ENCODE measurements at regions of chr20 and their contacts with region 1.

Region 1: DNA sequence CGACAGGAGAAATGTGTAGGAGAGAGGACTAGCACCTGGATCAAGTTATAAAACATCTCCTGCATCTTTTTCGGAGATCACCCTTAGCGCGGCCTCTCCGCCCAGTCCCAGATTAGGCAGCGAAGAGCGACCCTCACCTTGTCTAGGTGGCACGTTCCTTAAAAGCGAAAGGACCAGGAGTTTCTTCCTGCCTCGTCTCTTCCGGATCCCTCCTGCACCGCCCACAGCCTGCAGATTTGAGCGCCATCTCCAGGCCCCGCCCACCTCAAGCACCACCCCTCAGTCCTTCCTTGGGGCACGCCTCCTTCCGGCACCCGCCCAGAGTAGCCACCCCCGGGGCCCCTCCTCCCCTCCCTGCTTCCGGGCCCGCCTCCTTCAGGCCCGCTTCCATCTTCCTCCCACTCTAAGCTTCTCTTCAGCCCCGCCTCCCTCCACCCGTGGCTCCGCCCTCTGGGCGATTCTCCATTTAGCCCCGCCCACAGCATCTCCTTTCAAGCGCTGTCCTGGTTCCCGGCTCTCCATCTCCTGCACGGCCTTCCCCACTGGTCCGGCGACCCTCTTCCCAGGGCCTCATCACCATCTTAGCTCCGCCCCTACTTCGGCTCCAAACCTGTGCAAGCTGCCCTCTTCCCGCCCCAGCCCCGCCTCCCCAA is 662 bp upstream of the RALY start:
- DNase-seq: peak; percentile 97 to 100 (median 100)
- ATAC-seq: peak; percentile 91
- H3K4me3 ChIP-seq: peak overlapping the region; percentile 96
- H3K4me3 Mint-ChIP-seq: peak overlapping the region; percentile 87 to 99 (median 96)
- H3K27ac ChIP-seq: peak overlapping the region; percentile 97
- H3K27ac Mint-ChIP-seq: peak overlapping the region; percentile 91 to 99 (median 96)
- H3K4me1 ChIP-seq: peaks cover 32 to 43% of the 10 kb centered on the region in 2 donors
- H3K4me1 Mint-ChIP-seq: peaks cover 44 to 69% (median 60%) of the 10 kb centered on the region in 7 donors
- H3K27me3 ChIP-seq: no peaks in the 10 kb centered on the region
- H3K27me3 Mint-ChIP-seq: no peaks in the 10 kb centered on the region

Region 2: GRCh38 chr20:32972181-32973076 is 1020.6 kb before region 1 on chr20:
- CTCF ChIA-PET with region 1: no interaction called
- POLR2A ChIA-PET with region 1: no interaction called
- intact Hi-C with region 1: loop called in 1 of 2 experiments (anchors 5 kb)
- DNase-seq: peak; percentile 31 to 96 (median 94)
- ATAC-seq: peak; percentile 90
- H3K4me3 ChIP-seq: peak overlapping the region; percentile 53
- H3K4me3 Mint-ChIP-seq: peak overlapping the region in 1 of 10 donors; percentile 54
- H3K27ac ChIP-seq: peak overlapping the region; percentile 85
- H3K27ac Mint-ChIP-seq: no peak overlapping the region
- H3K4me1 ChIP-seq: peaks cover 73 to 92% of the 10 kb centered on the region in 2 donors
- H3K4me1 Mint-ChIP-seq: peaks cover 13 to 56% (median 46%) of the 10 kb centered on the region in 7 donors
- H3K27me3 ChIP-seq: no peaks in the 10 kb centered on the region
- H3K27me3 Mint-ChIP-seq: no peaks in the 10 kb centered on the region

Region 3: DNA sequence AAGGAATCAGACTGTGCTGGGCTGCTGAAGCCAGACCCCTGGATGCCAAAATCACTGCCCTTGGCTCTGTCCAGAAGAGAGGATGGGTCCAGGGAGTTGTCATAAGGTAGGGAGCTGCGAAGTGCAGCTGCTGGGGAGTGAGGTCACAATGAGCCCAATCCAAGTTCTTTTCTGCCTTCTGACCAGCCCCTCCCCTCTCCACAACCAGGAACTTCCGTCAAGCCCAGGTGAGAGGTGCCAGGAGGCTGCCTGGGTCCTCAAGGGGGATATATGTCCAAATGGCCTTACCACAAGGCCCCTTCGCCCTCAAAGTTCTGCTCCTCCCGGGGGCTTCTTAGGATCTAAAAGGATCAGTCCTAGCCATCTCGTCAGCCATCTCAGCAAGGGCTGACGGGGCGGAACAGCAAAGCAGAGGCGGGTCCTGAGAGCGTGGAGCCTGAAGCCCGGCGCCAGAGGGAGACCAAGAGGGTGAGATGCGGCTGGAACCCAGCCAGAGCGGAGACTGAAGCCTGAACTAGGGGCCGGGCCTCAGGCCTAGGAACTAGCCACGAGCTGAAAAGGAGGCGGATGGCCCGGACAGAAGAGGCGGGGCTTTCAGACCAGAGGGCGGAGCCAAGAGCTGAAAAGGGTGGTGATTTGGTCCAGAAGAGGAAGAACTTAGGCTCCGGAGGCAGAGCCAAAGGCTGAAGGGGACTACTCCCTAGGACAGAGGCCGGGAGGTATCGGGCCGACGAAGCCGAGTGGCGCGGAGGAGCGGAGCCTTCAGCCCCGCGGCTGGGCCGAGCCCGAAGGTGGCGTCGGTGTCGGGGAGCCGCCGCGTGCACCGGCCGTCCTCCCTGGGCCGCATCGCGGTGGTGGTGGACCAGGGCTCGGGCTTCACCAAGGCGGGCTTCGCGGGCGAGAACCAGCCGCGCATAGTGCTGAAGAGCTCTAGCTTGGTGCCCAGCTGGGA is 326.5 kb before region 1 on chr20 and contains the start of gene ACTL10:
- CTCF ChIA-PET with region 1: no interaction called
- POLR2A ChIA-PET with region 1: interaction called, 4 read pairs
- intact Hi-C with region 1: loop called (anchors 1 to 5 kb)
- DNase-seq: peak; percentile 45 to 86 (median 60)
- ATAC-seq: peak; percentile 79
- H3K4me3 ChIP-seq: peak within 1 kb of the TSS; percentile 79
- H3K4me3 Mint-ChIP-seq: peak within 1 kb of the TSS; percentile 95 to 100 (median 98)
- H3K27ac ChIP-seq: peak within 1 kb of the TSS; percentile 60
- H3K27ac Mint-ChIP-seq: peak within 1 kb of the TSS; percentile 90 to 98 (median 95)
- H3K4me1 ChIP-seq: peaks cover 19 to 21% of the 10 kb centered on the region in 2 donors
- H3K4me1 Mint-ChIP-seq: peaks cover 21 to 54% (median 35%) of the 10 kb centered on the region in 7 donors
- H3K27me3 ChIP-seq: no peaks in the 10 kb centered on the region
- H3K27me3 Mint-ChIP-seq: no peaks in the 10 kb centered on the region
- total RNA-seq, gene ACTL10: 0.66 to 4.9 (median 3.2) TPM

Region 4: DNA sequence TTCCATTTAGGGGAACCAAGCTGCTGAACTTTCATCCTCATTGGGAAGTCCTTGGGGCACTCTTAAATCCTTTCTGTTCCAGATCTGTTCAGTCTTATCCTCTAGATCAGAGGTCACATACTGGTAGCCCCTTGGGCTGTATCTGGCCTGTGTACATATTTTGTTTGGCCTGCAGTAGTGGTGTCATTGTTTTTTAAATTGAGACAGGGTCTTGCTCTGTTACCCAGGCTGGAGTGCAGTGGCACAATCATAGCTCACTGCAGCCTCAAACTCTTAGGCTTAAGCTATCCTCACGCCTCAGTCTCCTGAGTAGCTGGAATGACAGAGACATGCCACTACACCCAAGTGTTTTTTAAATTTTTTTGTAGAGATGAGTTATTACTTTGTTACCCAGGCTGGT is 15.4 kb after region 1 on chr20:
- CTCF ChIA-PET with region 1: no interaction called
- POLR2A ChIA-PET with region 1: interaction called, 8 read pairs
- intact Hi-C with region 1: loop called (anchors 2 kb)
- DNase-seq: no peak
- ATAC-seq: no peak
- H3K4me3 ChIP-seq: no peak overlapping the region
- H3K4me3 Mint-ChIP-seq: peak overlapping the region; percentile 30 to 76 (median 67)
- H3K27ac ChIP-seq: no peak overlapping the region
- H3K27ac Mint-ChIP-seq: peak overlapping the region in 8 of 9 donors; percentile 38 to 88 (median 68)
- H3K4me1 ChIP-seq: peaks cover 31 to 65% of the 10 kb centered on the region in 2 donors
- H3K4me1 Mint-ChIP-seq: peaks cover 72 to 96% (median 90%) of the 10 kb centered on the region in 7 donors
- H3K27me3 ChIP-seq: no peaks in the 10 kb centered on the region
- H3K27me3 Mint-ChIP-seq: no peaks in the 10 kb centered on the region

Region 5: DNA sequence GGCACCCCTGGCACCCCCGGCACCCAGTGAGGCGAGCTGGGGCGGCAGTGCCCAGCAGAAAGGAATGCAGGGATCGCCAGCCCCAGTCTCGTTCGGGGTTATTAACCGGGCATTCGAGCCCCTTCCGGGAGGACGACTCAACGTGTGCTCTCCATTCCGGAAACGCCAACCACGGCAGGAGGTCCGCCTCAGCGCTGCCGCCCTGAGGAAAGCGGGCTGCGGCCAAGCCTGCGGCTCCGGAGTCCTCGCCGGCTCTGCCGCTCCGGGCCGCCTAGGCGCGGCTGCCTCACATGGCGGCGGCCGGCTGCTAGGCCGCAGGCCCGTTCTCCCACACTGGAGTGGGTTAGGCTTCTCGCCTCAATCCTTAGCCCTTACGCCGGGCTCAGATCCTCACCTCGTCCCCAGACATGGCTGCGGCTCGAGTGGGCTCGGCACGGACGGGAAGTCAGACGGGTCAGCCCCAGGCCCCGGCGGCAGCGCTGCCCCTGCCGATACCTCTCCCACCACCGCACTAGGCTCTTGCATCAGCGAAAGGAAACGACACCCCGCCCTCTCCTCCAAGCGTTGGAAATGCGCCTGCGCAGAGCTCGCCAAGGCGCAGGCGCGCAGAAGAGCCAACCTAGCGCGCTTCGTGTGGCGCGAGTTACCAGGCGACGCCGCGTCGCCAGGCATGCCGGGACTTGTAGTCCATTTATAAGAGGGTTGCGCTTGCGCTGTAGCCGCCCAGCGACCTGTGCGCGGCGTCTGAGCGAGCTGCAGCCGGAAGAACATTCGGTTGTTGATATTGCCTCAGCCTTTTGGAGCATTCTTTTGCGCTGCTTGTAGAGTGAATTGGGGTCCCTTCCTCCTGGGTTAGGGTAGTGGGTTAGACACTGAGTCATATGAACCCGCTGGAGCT is 118.9 kb after region 1 on chr20 and contains the start of gene EIF2S2:
- CTCF ChIA-PET with region 1: no interaction called
- POLR2A ChIA-PET with region 1: interaction called, 26 read pairs
- intact Hi-C with region 1: loop called (anchors 1 kb)
- DNase-seq: peak; percentile 88 to 97 (median 95)
- ATAC-seq: peak; percentile 95
- H3K4me3 ChIP-seq: peak within 1 kb of the TSS; percentile 92
- H3K4me3 Mint-ChIP-seq: peak within 1 kb of the TSS; percentile 87 to 98 (median 96)
- H3K27ac ChIP-seq: peak within 1 kb of the TSS; percentile 89
- H3K27ac Mint-ChIP-seq: peak within 1 kb of the TSS; percentile 96 to 99 (median 98)
- H3K4me1 ChIP-seq: peaks cover 24 to 34% of the 10 kb centered on the region in 2 donors
- H3K4me1 Mint-ChIP-seq: peaks cover 34 to 53% (median 47%) of the 10 kb centered on the region in 7 donors
- H3K27me3 ChIP-seq: no peaks in the 10 kb centered on the region
- H3K27me3 Mint-ChIP-seq: peaks cover 0 to 15% (median 0%) of the 10 kb centered on the region in 5 donors
- total RNA-seq, gene EIF2S2: 16.8 to 68.4 (median 48.6) TPM

Region 6: DNA sequence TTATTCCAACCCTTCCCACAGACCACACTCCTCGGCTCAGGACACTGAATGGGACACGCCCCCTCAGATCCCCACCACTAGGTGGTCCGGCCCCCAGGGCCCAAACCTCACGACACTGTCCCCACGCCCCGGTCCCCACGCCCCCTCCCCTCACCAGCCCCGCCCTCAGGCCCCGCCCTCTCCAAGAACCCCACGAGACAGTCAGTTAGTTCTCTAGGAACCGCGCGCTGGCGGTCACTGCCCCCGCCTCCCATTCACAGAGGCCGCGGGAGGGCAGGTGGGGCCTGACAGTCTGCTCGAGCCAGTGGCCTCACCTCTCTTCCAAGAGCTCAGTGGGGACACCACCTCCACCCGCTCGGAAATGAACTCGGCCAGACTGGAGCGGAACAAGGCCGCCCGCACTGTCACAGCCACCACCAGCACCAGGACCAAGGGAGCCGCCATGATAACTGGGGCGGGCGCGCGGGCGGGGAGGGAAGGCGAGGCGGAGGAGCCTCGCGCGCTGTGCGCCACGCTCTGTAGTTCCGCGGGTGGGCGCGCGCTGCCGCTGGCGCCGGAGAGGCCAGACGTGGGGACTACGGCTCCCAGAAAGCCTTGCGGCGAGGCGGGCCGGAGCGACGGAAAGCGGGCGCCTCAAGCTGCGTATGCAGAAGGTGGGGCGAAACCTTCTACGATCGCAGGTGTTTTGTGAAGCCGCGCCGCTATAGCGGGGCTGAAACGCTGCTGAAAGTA is 683.8 kb after region 1 on chr20 and contains the start of gene PIGU:
- CTCF ChIA-PET with region 1: no interaction called
- POLR2A ChIA-PET with region 1: no interaction called
- intact Hi-C with region 1: loop called (anchors 1 kb)
- DNase-seq: peak; percentile 88 to 97 (median 96)
- ATAC-seq: peak; percentile 99
- H3K4me3 ChIP-seq: peak within 1 kb of the TSS; percentile 63
- H3K4me3 Mint-ChIP-seq: peak within 1 kb of the TSS; percentile 95 to 99 (median 96)
- H3K27ac ChIP-seq: peak within 1 kb of the TSS; percentile 95
- H3K27ac Mint-ChIP-seq: peak within 1 kb of the TSS; percentile 85 to 98 (median 97)
- H3K4me1 ChIP-seq: peaks cover 4 to 5% of the 10 kb centered on the region in 2 donors
- H3K4me1 Mint-ChIP-seq: peaks cover 14 to 37% (median 24%) of the 10 kb centered on the region in 7 donors
- H3K27me3 ChIP-seq: no peaks in the 10 kb centered on the region
- H3K27me3 Mint-ChIP-seq: no peaks in the 10 kb centered on the region
- total RNA-seq, gene PIGU: 8.6 to 21.3 (median 16.1) TPM

Region 7: DNA sequence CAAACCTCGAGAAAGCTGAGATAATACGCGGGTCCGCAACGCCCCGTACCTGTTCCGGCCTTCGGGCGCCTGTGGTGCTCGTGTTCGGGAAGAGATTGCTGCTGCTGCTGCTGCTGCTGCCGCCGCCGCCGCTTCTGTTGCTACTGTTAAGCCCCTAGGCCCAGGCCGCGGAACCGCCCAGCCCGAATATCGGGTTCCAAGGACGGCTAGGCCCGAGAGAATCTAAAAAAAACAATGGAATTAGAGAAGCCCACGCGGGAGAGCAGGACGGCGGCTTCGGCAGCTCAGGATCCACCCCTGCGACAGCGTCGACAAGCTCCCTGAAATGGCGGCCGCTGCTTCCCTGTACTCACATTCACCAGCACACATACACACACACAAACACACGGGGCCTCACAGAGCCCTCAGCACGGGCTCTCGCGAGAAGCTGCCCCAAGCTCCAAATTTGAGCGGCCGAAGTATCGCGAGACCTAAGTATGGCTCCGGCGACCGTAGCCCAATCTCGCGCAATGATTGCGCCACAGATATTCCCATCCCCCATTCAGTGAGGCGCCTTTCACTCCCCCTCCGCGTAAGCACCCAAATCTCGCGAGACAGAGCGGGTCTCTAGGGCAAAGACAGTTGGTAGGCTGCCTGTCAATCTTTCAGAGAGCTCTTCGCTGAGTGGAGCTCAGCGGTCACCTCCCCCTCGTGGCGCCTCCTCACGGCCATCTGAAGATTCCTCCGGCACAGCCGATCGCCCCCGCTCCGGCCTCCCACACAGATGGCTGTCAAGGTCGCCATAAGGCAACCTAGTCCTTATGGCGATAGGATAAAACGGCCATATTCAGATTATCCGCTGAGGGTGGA is 1749.1 kb after region 1 on chr20 and contains the start of gene RBM39:
- CTCF ChIA-PET with region 1: no interaction called
- POLR2A ChIA-PET with region 1: no interaction called
- intact Hi-C with region 1: loop called (anchors 2 to 5 kb)
- DNase-seq: peak; percentile 92 to 100 (median 99)
- ATAC-seq: peak; percentile 92
- H3K4me3 ChIP-seq: peak within 1 kb of the TSS; percentile 98
- H3K4me3 Mint-ChIP-seq: peak within 1 kb of the TSS; percentile 86 to 100 (median 98)
- H3K27ac ChIP-seq: peak within 1 kb of the TSS; percentile 98
- H3K27ac Mint-ChIP-seq: peak within 1 kb of the TSS; percentile 96 to 100 (median 100)
- H3K4me1 ChIP-seq: peaks cover 34 to 49% of the 10 kb centered on the region in 2 donors
- H3K4me1 Mint-ChIP-seq: peaks cover 22 to 53% (median 45%) of the 10 kb centered on the region in 7 donors
- H3K27me3 ChIP-seq: no peaks in the 10 kb centered on the region
- H3K27me3 Mint-ChIP-seq: no peaks in the 10 kb centered on the region
- total RNA-seq, gene RBM39: 372 to 1,041 (median 699) TPM

Measured in naive thymus-derived CD4-positive, alpha-beta T cell (primary cell).